Motor neuron (in vitro differentiated cells): ENCODE measurements at regions of chr6 and their contacts with region 1.

Region 1: DNA sequence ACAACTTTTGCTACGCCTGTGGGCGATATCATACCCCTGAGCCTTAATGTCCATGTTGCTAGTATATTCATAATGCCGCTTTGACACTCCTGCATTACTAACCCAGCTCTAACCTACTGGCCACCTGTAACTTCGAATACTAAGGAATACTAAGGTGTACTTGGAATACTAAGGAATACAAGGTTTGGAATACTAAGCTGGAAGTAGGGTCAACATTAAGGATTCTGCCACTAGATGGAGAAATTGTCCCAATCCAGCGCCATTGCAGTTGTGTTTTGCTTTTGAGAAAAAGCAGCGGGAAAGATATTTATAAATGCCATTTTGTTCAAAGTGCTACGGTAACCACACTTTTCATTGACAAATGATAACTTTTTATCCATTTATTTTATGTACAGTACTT is 10.7 kb downstream of the TBXT start:
- ATAC-seq: peak in 2 of 8 experiments; percentile 43 to 59
- H3K4me3 ChIP-seq: no peak overlapping the region
- H3K27ac ChIP-seq: no peak overlapping the region
- H3K4me1 ChIP-seq: no peaks in the 10 kb centered on the region

Region 2: DNA sequence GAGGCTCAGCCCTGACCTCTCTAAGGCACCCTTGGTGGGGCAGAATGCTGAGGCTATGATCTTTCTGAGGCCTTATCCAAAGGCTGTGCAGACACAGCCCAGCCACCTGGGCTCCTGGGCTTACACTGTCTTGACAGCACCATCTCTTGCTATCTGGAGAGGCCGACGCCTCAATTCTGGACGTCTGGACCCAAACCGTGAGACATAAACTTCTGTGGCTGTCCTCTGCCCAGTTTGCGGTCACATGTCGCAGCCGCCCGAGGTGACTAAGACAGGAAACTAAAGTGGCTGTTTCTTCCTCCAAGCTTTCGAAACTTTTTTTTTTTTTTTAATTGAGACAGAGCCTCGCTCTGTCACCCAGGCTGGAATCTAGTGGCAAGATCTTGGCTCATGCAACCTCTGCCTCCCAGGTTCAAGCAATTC is 101.9 kb after region 1 on chr6:
- in situ Hi-C with region 1: loop called in 1 of 9 experiments (anchors 25 kb)
- ATAC-seq: no peak
- H3K4me3 ChIP-seq: no peak overlapping the region
- H3K27ac ChIP-seq: no peak overlapping the region
- H3K4me1 ChIP-seq: no peaks in the 10 kb centered on the region

Region 3: DNA sequence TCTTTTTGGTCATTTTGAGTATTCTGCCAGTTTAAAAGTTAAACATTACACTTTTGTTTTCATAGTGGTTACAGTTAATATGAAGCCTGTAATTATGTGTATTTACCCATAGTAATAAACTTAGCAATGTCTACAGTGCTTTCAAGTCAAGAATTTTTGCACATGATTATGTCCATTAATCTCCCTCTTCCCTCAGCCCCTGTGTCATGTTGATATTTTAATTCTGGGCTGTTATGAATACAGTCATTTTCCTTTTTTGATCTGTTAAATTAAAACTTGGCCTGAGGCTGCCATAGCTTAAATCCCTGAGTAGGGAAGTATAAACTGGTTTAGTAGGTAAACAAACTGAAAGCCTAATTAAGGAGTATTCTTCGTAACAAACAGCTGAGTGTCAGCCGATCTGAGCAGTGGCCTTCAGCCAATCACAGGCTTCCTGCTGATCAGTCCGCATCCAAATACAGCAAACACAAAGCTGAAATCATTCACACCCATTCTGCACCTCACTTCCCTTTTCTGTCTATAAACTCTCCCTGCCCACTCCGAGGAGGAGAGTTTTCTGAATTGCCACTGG is 194.9 kb after region 1 on chr6:
- in situ Hi-C with region 1: no loop called
- ATAC-seq: peak; percentile 26 to 95 (median 58)
- H3K4me3 ChIP-seq: no peak overlapping the region
- H3K27ac ChIP-seq: no peak overlapping the region
- H3K4me1 ChIP-seq: peaks cover 7 to 11% of the 10 kb centered on the region in 2 donors

Region 4: GRCh38 chr6:166382933-166383801 is 226.2 kb after region 1 on chr6 and contains the start of gene MPC1:
- in situ Hi-C with region 1: loop called in 1 of 9 experiments (anchors 25 kb)
- ATAC-seq: peak; percentile 88 to 95 (median 90)
- H3K4me3 ChIP-seq: peak within 1 kb of the TSS; percentile 60 to 94 (median 74)
- H3K27ac ChIP-seq: peak within 1 kb of the TSS; percentile 89 to 96
- H3K4me1 ChIP-seq: peaks cover 0 to 9% of the 10 kb centered on the region in 2 donors
- total RNA-seq, gene MPC1: 39.0 to 91.6 (median 54.1) TPM

Region 5: GRCh38 chr6:166419286-166419685 is 262.3 kb after region 1 on chr6:
- in situ Hi-C with region 1: loop called in 1 of 9 experiments (anchors 25 kb)
- ATAC-seq: no peak
- H3K4me3 ChIP-seq: no peak overlapping the region
- H3K27ac ChIP-seq: no peak overlapping the region
- H3K4me1 ChIP-seq: no peaks in the 10 kb centered on the region

Region 6: GRCh38 chr6:167079853-167080297 is 922.9 kb after region 1 on chr6:
- in situ Hi-C with region 1: no loop called
- ATAC-seq: peak in 1 of 8 experiments; percentile 18
- H3K4me3 ChIP-seq: no peak overlapping the region
- H3K27ac ChIP-seq: no peak overlapping the region
- H3K4me1 ChIP-seq: no peaks in the 10 kb centered on the region